PC-3 (cell line): ENCODE measurements at regions of chr14 and their contacts with region 1.

Region 1: GRCh38 chr14:50003213-50004031 is 110.5 kb downstream of the ARF6 start:
- DNase-seq: peak; percentile 89
- ATAC-seq: peak; percentile 9
- H3K4me3 ChIP-seq: peak overlapping the region; percentile 64
- H3K27ac ChIP-seq: peak overlapping the region; percentile 97
- H3K4me1 ChIP-seq: peaks cover 72% of the 10 kb centered on the region
- H3K27me3 ChIP-seq: no peaks in the 10 kb centered on the region
- CTCF ChIP-seq: peak; percentile 32; the same call in 1 of the 2 replicates

Region 2: DNA sequence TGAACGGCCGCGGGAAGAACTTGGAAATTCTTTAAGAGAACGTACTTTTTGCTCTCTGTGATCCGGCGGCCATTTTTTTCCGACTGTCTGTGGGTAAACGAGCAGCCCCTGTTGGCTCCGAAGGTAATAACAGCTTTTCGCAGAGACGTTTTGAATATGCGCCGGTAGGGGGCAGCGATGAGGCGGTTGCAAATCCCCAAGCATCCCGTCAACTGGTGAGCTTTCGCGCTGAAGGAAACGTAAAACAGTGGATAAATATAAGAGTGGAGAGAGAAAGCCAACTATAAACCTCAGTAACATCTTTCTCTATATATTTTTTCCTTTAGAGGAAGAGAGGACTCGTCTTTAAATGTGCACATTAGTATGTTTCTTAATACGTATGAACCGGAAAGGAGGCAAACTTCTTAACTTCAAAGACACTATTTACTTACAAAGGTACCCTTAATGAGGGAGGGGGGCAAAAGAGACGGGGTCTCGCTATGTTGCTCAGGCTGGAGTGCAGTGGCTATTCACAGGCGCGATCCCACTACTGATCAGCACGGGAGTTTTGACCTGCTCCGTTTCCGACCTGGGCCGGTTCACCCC is 141.2 kb before region 1 on chr14:
- CTCF ChIA-PET with region 1: interaction called, 9 read pairs
- POLR2A ChIA-PET with region 1: interaction called, 9 read pairs
- intact Hi-C with region 1: loop called (anchors 1 kb)
- DNase-seq: peak; percentile 88
- ATAC-seq: peak; percentile 21
- H3K4me3 ChIP-seq: peak overlapping the region; percentile 73
- H3K27ac ChIP-seq: peak overlapping the region; percentile 66
- H3K4me1 ChIP-seq: peaks cover 20% of the 10 kb centered on the region
- H3K27me3 ChIP-seq: no peaks in the 10 kb centered on the region
- CTCF ChIP-seq: peak; percentile 100

Region 3: DNA sequence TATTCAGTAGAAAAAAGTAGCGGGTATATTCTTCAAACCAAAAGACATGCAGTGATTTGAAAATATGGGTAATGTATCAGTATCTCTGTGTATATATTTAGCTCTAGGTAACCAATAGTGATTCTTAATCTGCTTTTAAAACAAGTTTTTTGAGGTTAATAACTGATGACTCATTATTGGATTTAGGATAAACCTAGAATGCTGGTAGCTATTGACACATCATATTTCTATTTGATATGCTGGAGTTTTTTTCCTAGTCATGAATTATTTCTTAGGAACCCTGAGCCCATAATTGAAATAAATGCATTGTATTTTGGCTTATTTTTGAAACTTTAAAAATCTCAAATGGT is 95.0 kb before region 1 on chr14:
- CTCF ChIA-PET with region 1: interaction called, 7 read pairs
- POLR2A ChIA-PET with region 1: interaction called, 16 read pairs
- intact Hi-C with region 1: loop called (anchors 1 kb)
- DNase-seq: peak; percentile 93
- ATAC-seq: peak; percentile 42
- H3K4me3 ChIP-seq: peak overlapping the region; percentile 33; the same call in 1 of the 2 replicates
- H3K27ac ChIP-seq: peak overlapping the region; percentile 85
- H3K4me1 ChIP-seq: peaks cover 59% of the 10 kb centered on the region
- H3K27me3 ChIP-seq: no peaks in the 10 kb centered on the region
- CTCF ChIP-seq: no peak

Region 4: GRCh38 chr14:49934646-49935045 is 68.8 kb before region 1 on chr14:
- CTCF ChIA-PET with region 1: no interaction called
- POLR2A ChIA-PET with region 1: no interaction called
- intact Hi-C with region 1: no loop called
- DNase-seq: no peak
- ATAC-seq: no peak; the same call in 1 of the 2 replicates
- H3K4me3 ChIP-seq: no peak overlapping the region
- H3K27ac ChIP-seq: no peak overlapping the region
- H3K4me1 ChIP-seq: no peaks in the 10 kb centered on the region
- H3K27me3 ChIP-seq: no peaks in the 10 kb centered on the region
- CTCF ChIP-seq: no peak

Region 5: GRCh38 chr14:49971156-49972130 is 32.0 kb before region 1 on chr14:
- CTCF ChIA-PET with region 1: interaction called, 18 read pairs
- POLR2A ChIA-PET with region 1: interaction called, 17 read pairs
- intact Hi-C with region 1: loop called (anchors 1 kb)
- DNase-seq: peak; percentile 43
- ATAC-seq: peak; percentile 0
- H3K4me3 ChIP-seq: peak overlapping the region; percentile 38
- H3K27ac ChIP-seq: peak overlapping the region; percentile 95
- H3K4me1 ChIP-seq: peaks cover 79% of the 10 kb centered on the region
- H3K27me3 ChIP-seq: no peaks in the 10 kb centered on the region
- CTCF ChIP-seq: no peak

Region 6: GRCh38 chr14:50045039-50045711 is 41.8 kb after region 1 on chr14:
- CTCF ChIA-PET with region 1: no interaction called
- POLR2A ChIA-PET with region 1: interaction called, 4 read pairs
- intact Hi-C with region 1: loop called (anchors 1 kb)
- DNase-seq: peak; percentile 97
- ATAC-seq: peak; percentile 89
- H3K4me3 ChIP-seq: no peak overlapping the region
- H3K27ac ChIP-seq: peak overlapping the region; percentile 97
- H3K4me1 ChIP-seq: peaks cover 59% of the 10 kb centered on the region
- H3K27me3 ChIP-seq: no peaks in the 10 kb centered on the region
- CTCF ChIP-seq: peak; percentile 31; the same call in 1 of the 2 replicates

Region 7: GRCh38 chr14:50447461-50447860 is 444.0 kb after region 1 on chr14:
- CTCF ChIA-PET with region 1: no interaction called
- POLR2A ChIA-PET with region 1: interaction called, 14 read pairs
- intact Hi-C with region 1: no loop called
- DNase-seq: peak; percentile 93
- ATAC-seq: peak; percentile 75
- H3K4me3 ChIP-seq: no peak overlapping the region
- H3K27ac ChIP-seq: peak overlapping the region; percentile 50
- H3K4me1 ChIP-seq: peaks cover 31% of the 10 kb centered on the region
- H3K27me3 ChIP-seq: no peaks in the 10 kb centered on the region
- CTCF ChIP-seq: no peak